Endothelial cell of umbilical vein (primary cell): ENCODE measurements at regions of chr22 and their contacts with region 1.

Region 1: DNA sequence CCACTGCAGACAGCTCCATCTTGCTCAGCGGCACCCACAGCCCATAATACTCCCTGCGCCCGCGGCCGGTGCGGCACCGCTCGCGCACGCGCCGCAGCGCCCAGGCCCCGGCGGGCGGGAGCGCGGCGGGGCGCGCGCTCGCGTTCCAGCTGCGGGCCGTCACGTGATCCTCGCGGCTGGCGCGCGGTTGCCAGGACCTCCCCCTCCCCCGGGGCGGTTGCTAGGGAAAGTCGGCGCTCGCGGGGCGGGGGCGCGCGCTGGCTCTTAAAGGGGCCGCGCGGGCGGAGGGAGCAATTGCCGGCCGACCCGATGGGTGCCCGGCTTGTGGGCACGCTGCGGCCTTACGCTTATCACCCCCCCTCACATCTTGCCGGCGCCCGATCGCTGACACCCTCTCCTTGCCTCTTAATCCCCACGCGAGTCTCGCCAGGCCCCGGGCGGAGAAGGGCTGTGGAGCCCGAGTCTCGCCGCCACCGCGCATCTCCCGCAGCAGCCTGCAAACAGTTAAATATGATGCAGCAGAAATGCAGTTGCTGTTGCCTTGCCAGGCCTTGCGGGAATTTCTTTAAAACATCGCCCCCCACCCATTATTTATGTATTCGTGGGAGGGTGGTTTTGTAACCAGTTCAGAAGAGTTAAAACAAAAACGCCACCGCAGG is at the start of gene CBX6:
- DNase-seq: peak; percentile 92
- H3K4me3 ChIP-seq: peak within 1 kb of the TSS; percentile 76 to 82 (median 79)
- H3K27ac ChIP-seq: peak within 1 kb of the TSS; percentile 21
- H3K4me1 ChIP-seq: peaks cover 17% of the 10 kb centered on the region
- H3K27me3 ChIP-seq: peaks cover 14 to 25% of the 10 kb centered on the region in 2 experiments
- CTCF ChIP-seq: no peak
- POLR2A ChIP-seq: peak; percentile 80
- total RNA-seq, gene CBX6: 60.9 and 62.6 TPM in 2 replicates

Region 2: DNA sequence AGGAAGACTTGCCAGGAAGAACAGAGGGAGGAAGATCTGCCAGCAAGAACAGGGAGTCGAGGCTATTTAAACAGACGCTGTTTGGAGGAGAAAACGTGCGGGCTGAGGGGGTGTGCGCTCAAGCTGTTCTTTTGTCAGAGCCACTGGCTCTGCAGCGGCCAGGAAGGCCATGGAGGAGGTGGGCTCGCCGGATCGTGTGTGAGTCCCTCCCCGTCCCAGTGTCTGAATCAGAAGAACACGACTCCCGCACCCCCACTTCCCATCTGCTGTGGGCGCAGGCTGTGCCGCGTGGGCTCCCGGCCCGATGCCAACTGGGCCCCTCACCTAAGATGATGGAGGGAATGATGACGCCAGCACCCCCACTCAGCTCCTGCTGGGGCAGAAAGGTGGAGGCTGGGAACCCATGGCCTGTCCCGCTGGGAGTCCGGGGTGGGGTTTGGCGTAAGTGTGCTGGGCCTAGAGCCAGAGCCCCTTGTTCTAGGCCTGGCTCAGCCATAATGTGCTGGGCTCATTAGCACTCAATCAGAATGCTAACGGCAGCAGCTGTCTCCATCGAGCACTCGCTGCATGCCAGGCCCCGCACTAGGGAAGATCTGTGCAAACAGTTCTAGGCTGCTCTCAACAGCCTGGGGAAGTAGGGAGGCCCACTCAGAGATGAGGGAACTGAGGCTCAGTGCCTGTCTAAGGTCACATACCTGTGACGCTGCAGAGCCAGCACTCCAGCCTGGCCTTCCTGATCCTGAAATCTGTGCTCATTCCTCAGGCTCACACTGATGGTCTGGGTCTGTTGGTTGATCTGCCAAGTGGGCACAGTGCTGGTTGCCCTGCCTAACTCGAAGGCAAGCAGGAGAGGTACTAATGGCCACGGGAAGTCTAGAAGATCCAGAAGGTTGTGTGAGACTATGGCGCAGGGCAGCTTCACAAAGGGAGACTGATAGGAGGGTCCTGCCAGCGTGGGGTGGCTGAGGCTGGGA is 40.0 kb before region 1 on chr22:
- CTCF ChIA-PET with region 1: no interaction called
- POLR2A ChIA-PET with region 1: no interaction called
- dilution Hi-C with region 1: no loop called
- intact Hi-C with region 1: no loop called
- DNase-seq: no peak
- H3K4me3 ChIP-seq: no peak overlapping the region
- H3K27ac ChIP-seq: no peak overlapping the region
- H3K4me1 ChIP-seq: no peaks in the 10 kb centered on the region
- H3K27me3 ChIP-seq: no peaks in the 10 kb centered on the region
- CTCF ChIP-seq: no peak
- POLR2A ChIP-seq: no peak

Region 3: GRCh38 chr22:38843201-38843715 is 29.0 kb before region 1 on chr22:
- CTCF ChIA-PET with region 1: interaction called, 11 read pairs
- POLR2A ChIA-PET with region 1: no interaction called
- dilution Hi-C with region 1: no loop called
- intact Hi-C with region 1: no loop called
- DNase-seq: peak; percentile 64
- H3K4me3 ChIP-seq: no peak overlapping the region
- H3K27ac ChIP-seq: no peak overlapping the region
- H3K4me1 ChIP-seq: peaks cover 3% of the 10 kb centered on the region
- H3K27me3 ChIP-seq: peaks cover 20 to 29% of the 10 kb centered on the region in 2 experiments
- CTCF ChIP-seq: peak; percentile 21 to 40
- POLR2A ChIP-seq: no peak

Region 4: DNA sequence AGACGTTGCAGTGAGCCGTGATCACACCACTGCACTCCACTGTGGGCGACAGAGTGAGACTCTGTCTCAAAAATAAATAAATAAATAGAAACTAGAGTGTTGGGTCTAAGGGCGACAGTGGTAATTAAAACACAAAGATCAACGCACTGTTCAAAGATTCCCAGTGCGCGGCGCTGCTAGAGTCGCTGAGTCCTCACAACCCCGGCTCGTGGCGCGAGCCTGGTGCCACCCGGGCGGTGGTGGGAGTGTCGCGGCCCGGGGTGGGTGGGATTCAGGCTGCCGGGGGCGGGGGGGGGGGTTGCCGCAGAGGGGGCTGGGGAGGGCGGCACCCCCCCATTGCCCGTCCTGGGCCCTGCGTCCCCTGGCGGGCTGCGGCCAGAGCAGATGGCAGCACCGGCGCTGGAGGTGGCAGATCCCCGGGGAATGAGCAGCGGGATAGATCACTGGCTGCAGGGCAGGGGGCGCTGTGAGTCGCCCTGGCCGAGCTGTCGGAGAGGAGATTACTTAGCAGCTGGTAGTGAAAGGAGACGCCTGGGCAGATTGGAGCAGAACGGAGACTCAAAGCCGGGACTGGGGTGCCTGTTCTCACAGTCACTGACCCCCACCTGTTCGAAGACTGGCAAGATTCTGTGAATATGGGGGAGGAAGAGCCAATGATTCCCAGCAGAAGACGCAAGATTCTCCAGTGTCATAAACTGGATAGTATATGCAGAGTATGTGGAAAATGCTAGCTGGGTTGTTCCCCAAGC is 54.9 kb after region 1 on chr22:
- CTCF ChIA-PET with region 1: interaction called, 26 read pairs
- POLR2A ChIA-PET with region 1: interaction called, 3 read pairs
- dilution Hi-C with region 1: no loop called
- intact Hi-C with region 1: loop called (anchors 1 kb)
- DNase-seq: peak; percentile 63
- H3K4me3 ChIP-seq: no peak overlapping the region
- H3K27ac ChIP-seq: no peak overlapping the region
- H3K4me1 ChIP-seq: peaks cover 18% of the 10 kb centered on the region
- H3K27me3 ChIP-seq: peaks cover 0 to 2% of the 10 kb centered on the region in 2 experiments
- CTCF ChIP-seq: peak; percentile 64 to 90
- POLR2A ChIP-seq: no peak

Region 5: DNA sequence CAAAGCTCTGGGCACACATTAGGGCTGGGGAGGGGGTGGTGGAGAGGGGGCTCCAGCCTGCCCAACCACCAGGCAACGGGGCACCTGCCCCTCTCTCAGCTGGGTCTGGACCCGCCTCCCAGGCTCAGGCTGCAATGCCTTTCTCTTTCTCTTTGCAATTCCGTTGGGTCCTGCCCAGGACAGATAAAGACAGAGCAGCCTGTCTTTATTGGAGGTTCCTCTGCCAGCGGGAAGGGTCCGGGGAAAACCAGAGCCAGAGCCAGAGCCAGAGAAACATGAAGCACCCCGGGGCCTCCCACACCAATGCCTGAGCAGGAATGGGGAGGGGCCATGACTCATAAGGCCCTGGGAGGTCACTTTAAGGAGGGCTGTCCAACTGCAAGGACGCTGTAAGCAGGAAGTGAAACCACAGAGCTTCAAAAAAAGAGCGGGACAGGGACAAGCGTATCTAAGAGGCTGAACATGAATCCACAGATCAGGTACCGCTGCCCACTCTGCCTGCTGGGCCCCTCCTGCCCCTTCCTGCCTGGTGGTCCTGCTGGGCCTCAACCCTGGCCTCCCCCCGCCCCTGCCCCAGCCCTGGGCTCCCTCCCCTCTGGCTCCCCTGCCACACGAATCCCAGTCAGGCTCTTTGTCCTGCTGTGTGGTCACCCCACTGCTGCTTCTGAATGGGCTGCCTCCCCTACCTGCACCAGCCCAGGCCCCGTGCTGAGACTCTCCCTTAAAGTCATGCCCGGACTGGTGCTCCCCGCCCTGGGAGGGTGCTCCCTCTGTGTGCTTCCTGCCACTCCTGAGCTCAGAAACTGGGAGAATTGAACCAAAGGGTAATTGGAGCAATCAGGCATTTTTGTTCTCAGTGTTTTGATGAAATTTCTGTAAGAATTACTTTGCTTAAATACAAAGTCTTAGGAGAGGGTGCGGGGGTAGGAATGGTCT is 110.0 kb after region 1 on chr22 and contains the start of gene APOBEC3B:
- CTCF ChIA-PET with region 1: interaction called, 9 read pairs
- POLR2A ChIA-PET with region 1: no interaction called
- dilution Hi-C with region 1: no loop called
- intact Hi-C with region 1: loop called (anchors 1 kb)
- DNase-seq: peak; percentile 79
- H3K4me3 ChIP-seq: peak within 1 kb of the TSS; percentile 3 to 40 (median 28)
- H3K27ac ChIP-seq: no peak within 1 kb of the TSS
- H3K4me1 ChIP-seq: peaks cover 2% of the 10 kb centered on the region
- H3K27me3 ChIP-seq: no peaks in the 10 kb centered on the region
- CTCF ChIP-seq: no peak
- POLR2A ChIP-seq: no peak
- total RNA-seq, gene APOBEC3B: 10.3 and 13.6 TPM in 2 replicates

Region 6: DNA sequence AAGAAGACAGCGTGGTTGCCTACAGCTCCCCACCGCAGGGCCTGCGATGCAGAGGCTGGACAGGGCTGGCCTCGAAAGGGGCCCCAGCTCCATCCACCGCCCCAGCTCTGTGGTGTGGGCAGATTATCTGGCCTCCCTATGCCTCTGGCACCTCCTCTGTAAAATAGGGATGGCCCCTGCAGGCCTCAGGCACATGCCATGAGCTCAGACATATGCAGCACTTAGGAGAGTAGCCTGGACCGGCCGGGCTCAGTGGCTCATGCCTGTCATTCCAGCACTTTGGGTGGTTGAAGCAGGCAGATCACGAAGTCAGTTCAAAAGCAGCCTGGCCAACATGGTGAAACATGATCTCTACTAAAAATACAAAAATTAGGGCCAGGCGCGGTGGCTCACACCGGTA is 156.0 kb after region 1 on chr22:
- CTCF ChIA-PET with region 1: no interaction called
- POLR2A ChIA-PET with region 1: no interaction called
- dilution Hi-C with region 1: no loop called
- intact Hi-C with region 1: no loop called
- DNase-seq: no peak
- H3K4me3 ChIP-seq: no peak overlapping the region
- H3K27ac ChIP-seq: no peak overlapping the region
- H3K4me1 ChIP-seq: no peaks in the 10 kb centered on the region
- H3K27me3 ChIP-seq: no peaks in the 10 kb centered on the region
- CTCF ChIP-seq: no peak
- POLR2A ChIP-seq: no peak

Region 7: DNA sequence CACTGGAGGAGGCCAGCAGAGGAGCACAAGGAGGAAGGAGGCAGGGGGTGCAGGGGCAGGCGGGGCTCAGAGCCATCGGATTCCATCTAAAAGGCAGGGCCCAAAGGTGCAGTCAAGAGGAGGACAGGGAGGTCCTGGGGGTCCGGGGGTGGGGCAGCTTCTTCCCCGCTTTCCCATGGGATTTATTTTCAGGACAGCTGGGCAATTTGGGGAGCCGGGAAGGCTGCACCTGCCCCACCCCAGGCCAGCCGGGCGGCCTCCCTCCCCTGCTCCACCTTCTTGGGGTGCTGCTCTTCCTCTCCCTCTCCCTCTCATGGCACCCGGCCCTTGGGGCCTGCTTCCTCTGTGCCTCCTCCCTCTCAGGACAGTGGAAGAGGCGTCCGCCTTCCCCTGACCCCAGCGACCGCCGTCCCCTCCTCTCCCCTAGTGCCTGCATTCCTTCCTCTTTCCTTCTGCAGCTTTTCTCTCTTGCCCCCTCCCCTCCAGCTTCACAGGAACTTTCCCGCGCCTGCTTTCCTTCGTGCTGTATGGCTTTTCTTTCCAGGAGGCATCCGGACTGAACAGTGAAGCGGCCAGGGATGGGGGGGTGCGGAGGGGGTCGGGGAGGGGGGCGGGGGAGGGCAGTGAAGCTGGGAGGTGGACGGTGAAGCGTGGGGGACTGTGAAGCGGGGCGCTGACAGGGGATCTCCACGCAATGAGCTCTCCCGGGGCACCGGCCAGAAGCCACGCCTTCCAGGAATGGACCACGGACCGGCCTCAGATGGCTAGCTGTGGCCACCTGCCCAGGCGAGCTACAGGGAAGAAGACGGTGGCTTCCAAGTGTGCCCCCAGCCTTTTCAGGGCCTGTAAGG is 251.7 kb after region 1 on chr22:
- CTCF ChIA-PET with region 1: interaction called, 19 read pairs
- POLR2A ChIA-PET with region 1: no interaction called
- dilution Hi-C with region 1: no loop called
- intact Hi-C with region 1: loop called (anchors 2 kb)
- DNase-seq: no peak
- H3K4me3 ChIP-seq: no peak overlapping the region
- H3K27ac ChIP-seq: no peak overlapping the region
- H3K4me1 ChIP-seq: no peaks in the 10 kb centered on the region
- H3K27me3 ChIP-seq: peaks cover 3 to 4% of the 10 kb centered on the region in 2 experiments
- CTCF ChIP-seq: no peak
- POLR2A ChIP-seq: no peak